Mammary epithelial cell (primary cell): ENCODE measurements at regions of chr17 and their contacts with region 1.

Region 1: GRCh38 chr17:49390548-49391324 is 23.9 kb downstream of the PHB1 start:
- DNase-seq: no peak
- H3K4me3 ChIP-seq: no peak overlapping the region
- H3K27ac ChIP-seq: no peak overlapping the region
- H3K4me1 ChIP-seq: no peaks in the 10 kb centered on the region
- H3K27me3 ChIP-seq: no peaks in the 10 kb centered on the region
- CTCF ChIP-seq: no peak

Region 2: GRCh38 chr17:49180303-49180702 is 210.4 kb before region 1 on chr17:
- CTCF ChIA-PET with region 1: no interaction called
- dilution Hi-C with region 1: no loop called
- in situ Hi-C with region 1: no loop called
- intact Hi-C with region 1: loop called (anchors 2 kb)
- DNase-seq: no peak
- H3K4me3 ChIP-seq: no peak overlapping the region
- H3K27ac ChIP-seq: no peak overlapping the region
- H3K4me1 ChIP-seq: no peaks in the 10 kb centered on the region
- H3K27me3 ChIP-seq: no peaks in the 10 kb centered on the region
- CTCF ChIP-seq: peak; percentile 79 to 80

Region 3: DNA sequence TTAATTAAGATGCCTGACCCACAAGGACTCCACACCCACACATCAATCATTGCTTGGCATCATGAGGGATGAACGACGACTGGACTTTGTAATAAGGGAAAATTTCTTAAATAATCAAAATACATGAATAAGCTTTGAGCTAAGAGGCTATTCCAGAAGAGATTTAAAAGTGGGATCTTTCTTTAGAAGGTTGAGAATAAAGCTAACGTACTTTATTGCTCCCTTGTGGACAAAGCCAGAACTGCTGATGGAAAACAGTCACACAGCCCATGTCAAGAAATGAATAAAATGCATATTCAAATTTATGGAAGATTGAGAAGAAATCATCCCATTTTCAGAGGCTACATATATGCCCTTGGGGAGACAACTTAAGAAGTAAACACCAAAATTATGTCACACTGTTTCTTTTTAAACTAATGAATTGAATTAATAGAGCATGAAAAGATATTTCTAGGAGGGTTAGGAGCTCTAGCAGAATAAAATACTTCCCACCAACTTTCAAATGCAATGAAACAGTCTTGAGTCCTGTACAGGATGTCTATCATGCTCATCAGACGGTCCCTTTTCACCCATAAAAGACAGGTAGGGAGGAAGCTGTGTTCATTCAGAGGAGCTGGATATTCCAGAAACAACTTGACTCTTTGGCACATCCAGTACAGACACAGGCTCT is 99.9 kb before region 1 on chr17:
- CTCF ChIA-PET with region 1: no interaction called
- dilution Hi-C with region 1: loop called (anchors 5 kb)
- in situ Hi-C with region 1: no loop called
- intact Hi-C with region 1: no loop called
- DNase-seq: no peak
- H3K4me3 ChIP-seq: no peak overlapping the region
- H3K27ac ChIP-seq: no peak overlapping the region
- H3K4me1 ChIP-seq: no peaks in the 10 kb centered on the region
- H3K27me3 ChIP-seq: no peaks in the 10 kb centered on the region
- CTCF ChIP-seq: peak; percentile 73 to 83

Region 4: DNA sequence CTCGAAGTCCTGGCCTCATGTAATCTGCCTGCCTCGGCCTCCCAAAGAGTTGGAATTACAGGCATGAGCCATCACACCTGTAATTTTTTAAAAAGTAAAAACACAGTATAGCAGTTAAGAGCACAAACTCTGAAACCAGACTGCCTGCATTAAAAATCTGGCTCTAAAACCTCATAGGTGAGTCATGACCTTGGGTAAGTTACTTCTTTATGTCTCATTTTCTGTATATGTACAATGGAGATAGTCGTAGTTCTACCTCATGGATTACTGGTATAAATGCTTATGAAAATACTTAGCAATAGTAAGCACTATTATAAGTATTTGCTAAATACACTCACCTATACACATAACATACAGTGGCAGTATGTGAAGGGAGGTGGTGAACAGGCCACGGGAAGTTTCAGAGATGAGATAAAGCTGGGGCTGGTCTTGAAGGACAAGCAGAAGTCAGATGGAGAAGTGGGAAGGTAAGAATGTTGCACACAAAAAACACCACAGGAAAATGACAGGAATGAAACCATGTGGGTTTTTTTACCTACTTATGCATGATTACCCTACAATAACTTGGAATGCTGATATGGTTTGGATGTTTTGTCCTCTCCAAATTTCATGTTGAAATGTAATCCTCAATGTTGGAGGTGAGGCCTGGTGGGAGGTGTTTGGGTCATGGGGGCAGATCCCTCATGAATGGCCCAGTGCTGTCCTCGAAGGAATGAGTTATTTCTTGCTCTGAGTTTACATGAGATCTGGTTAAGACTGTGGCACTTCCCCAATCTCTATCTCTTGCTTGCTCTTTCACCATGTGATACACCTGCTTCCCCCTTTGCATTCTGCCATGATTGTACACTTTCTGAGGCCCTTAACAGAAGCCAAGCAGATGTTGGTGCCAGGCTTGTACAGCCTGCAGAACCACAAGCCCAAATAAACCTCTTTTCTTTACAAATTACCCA is 62.6 kb before region 1 on chr17:
- CTCF ChIA-PET with region 1: no interaction called
- dilution Hi-C with region 1: loop called (anchors 5 kb)
- in situ Hi-C with region 1: no loop called
- intact Hi-C with region 1: no loop called
- DNase-seq: peak; percentile 30
- H3K4me3 ChIP-seq: no peak overlapping the region
- H3K27ac ChIP-seq: no peak overlapping the region
- H3K4me1 ChIP-seq: no peaks in the 10 kb centered on the region
- H3K27me3 ChIP-seq: no peaks in the 10 kb centered on the region
- CTCF ChIP-seq: no peak

Region 5: DNA sequence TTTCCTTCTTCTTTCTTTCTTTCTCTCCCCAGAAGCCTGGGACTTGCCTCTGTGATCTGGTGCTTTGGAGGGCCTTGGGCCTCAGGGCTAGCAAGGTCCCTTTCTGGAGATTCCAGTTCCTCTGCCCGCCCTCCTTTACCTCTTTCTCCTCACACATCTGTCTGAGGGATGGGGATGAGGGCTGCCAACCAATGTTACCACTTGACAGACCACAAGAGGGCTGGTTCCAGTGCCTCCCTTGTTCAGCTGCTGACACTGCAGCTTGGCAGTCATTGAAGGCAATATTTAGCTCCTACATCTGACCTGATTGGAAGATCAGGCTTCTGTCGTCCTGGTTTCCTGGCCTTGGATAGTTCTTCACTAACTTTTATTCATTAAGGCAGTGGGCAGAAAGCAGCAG is 25.1 kb before region 1 on chr17:
- CTCF ChIA-PET with region 1: interaction called, 5 read pairs
- dilution Hi-C with region 1: no loop called
- in situ Hi-C with region 1: no loop called
- intact Hi-C with region 1: loop called (anchors 2 kb)
- DNase-seq: no peak
- H3K4me3 ChIP-seq: no peak overlapping the region
- H3K27ac ChIP-seq: no peak overlapping the region
- H3K4me1 ChIP-seq: peaks cover 9% of the 10 kb centered on the region
- H3K27me3 ChIP-seq: no peaks in the 10 kb centered on the region
- CTCF ChIP-seq: peak; percentile 17 to 29

Region 6: GRCh38 chr17:49438436-49439278 is 47.9 kb after region 1 on chr17:
- CTCF ChIA-PET with region 1: no interaction called
- dilution Hi-C with region 1: no loop called
- in situ Hi-C with region 1: no loop called
- intact Hi-C with region 1: no loop called
- DNase-seq: no peak
- H3K4me3 ChIP-seq: no peak overlapping the region
- H3K27ac ChIP-seq: no peak overlapping the region
- H3K4me1 ChIP-seq: no peaks in the 10 kb centered on the region
- H3K27me3 ChIP-seq: no peaks in the 10 kb centered on the region
- CTCF ChIP-seq: no peak

Region 7: DNA sequence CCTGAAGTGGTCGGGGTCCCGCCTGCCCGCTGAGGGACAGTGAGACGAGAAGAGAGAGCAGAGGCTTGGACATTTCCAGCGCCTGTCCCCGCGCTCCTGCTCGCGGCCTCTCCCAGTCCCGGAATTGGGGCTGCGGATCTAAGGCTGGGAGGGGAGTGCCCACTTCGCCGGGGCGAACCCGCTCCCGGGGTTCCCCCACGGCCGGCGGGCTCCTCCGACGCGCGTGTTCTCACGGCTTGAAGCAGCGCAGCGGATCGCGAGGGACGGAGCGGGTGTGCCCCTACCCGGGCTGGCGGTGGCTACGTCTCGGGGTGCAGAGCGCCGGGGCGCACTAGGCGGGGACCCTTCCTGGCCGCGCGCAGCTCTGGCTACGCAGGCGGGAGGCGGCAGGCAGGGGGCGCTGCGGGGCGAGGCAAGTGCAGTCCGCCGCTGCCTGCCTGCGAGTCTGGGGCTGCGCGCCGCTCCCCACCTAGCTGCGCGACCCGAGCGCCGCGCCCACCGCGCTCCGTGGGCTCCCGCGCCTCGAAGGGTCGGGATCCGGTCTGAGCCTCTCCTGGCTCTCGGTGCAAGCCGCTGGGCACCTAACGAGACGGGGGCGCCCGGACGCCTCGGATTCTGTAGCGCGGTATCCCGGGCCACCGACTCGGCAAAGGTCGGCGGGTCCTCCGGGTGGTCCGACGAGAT is 105.6 kb after region 1 on chr17:
- CTCF ChIA-PET with region 1: no interaction called
- dilution Hi-C with region 1: no loop called
- in situ Hi-C with region 1: no loop called
- intact Hi-C with region 1: no loop called
- DNase-seq: peak; percentile 59
- H3K4me3 ChIP-seq: peak overlapping the region; percentile 60 to 79 (median 63)
- H3K27ac ChIP-seq: no peak overlapping the region
- H3K4me1 ChIP-seq: peaks cover 24% of the 10 kb centered on the region
- H3K27me3 ChIP-seq: no peaks in the 10 kb centered on the region
- CTCF ChIP-seq: peak; percentile 52 to 73